ENCODE measurements at regions of chr2 and their contacts with region 1.

Region 1: GRCh38 chr2:237474931-237475703 is 11.9 kb upstream of the MLPH start:
- DNase-seq: peak; percentile 89
- CTCF ChIP-seq: peak; percentile 91

Region 2: DNA sequence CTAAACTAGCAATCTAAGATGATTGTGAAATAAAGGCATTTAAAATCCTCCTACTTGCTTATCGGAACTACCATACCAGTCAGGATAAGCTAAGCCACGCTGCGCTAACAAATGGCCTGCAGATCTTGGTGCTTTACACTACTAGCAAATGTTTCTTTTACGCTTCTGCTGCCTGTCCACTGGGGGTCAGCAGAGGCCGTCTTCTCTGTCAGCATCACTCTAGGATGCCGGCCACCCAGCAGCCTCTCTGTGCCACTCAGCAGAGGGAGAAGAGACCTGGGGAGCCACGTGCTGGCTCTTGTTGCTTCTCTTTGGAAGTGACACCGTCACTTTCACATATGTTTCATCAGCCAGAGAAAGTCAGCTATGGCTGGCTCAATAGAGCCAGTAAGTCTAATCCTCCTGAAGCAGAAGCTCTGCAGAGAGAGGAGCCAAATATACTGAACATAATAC is 352.9 kb before region 1 on chr2:
- CTCF ChIA-PET with region 1: interaction called, 19 read pairs
- POLR2A ChIA-PET with region 1: no interaction called
- DNase-seq: peak; percentile 52
- CTCF ChIP-seq: peak; percentile 69

Region 3: DNA sequence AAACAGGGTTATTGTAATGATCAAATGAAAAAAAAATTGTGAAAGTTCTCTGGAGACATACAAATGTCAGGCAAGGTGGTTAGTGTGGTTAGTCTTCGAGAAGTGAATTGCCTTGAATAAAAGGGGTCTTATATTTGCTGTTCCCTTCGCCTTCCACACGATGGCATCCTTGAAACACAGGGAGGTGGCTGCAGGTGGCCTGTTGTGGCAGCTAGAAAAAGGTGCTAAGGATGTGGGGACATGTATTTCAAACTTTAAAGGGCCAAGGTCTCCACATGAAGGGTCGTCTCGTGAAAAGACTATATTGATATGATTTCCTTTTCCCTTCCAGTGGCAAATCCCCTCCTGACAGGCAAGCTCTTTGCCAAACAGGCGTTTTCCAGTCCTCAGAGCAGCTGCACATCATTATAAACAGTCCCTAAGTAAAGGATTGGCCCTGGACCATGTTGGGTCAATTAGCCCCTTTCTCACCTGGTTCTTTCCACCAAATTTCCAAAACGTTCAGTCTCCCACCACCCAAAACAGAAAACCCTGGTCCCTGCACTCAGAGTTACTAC is 321.0 kb before region 1 on chr2:
- CTCF ChIA-PET with region 1: interaction called, 14 read pairs
- POLR2A ChIA-PET with region 1: no interaction called
- DNase-seq: peak; percentile 64
- CTCF ChIP-seq: peak; percentile 48

Region 4: GRCh38 chr2:237421542-237422116 is 53.5 kb before region 1 on chr2:
- CTCF ChIA-PET with region 1: interaction called, 22 read pairs
- POLR2A ChIA-PET with region 1: no interaction called
- DNase-seq: peak; percentile 68
- CTCF ChIP-seq: peak; percentile 58